ENCODE measurements at regions of chr20 and their contacts with region 1.

Region 1: DNA sequence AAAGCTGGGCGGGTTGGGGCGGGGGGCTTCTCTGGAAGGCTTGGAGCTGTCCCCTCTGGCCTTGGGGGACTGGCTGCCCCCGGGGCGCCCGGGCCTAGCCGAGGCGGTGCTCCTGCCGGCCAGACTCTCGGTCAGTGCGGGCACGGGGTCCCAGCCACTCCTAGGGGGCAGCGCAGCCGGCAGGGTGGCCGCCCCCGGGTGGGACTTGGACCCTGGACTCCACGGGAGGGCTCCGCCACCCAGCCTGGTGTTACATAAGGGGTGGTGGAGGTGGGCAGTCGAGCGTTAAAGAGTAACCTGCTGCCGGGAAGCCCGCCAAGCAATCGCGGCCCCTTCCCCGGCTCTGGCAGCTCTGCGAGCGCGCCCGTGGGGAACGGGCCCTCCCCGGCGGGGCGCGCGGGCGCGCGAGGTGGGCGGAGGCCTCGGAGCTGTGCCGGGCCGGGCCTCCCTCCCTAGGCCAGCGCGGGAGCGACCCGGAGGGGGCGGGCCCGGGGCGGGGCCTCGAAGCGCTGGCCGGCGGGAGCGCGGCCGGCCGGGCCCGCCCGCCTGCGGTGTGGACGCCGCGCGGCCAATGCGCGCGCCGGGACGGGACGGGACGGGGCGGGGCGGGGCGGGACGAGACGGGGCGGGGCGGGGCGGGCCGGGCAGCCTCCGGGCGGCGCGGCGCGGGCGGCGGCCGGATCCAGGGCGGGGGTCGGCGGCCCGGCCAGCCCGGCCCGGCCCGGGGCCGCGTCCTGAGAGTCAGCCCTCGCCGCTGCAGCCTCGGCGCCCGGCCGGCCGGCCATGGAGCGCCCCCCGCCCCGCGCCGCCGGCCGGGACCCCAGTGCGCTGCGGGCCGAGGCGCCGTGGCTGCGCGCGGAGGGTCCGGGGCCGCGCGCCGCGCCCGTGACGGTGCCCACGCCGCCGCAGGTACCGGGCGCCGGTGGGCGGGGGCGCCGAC is at the start of gene SLC2A4RG:
- DNase-seq: peak; percentile 83 to 90 (median 88)
- H3K4me3 ChIP-seq: peak within 1 kb of the TSS; percentile 75
- H3K27ac ChIP-seq: peak within 1 kb of the TSS; percentile 73 to 95
- H3K4me1 ChIP-seq: peaks cover 11% of the 10 kb centered on the region
- H3K27me3 ChIP-seq: no peaks in the 10 kb centered on the region
- CTCF ChIP-seq: no peak
- EP300 ChIP-seq: no peak
- POLR2A ChIP-seq: no peak
- total RNA-seq, gene SLC2A4RG: 20.6 to 199 (median 104) TPM

Region 2: DNA sequence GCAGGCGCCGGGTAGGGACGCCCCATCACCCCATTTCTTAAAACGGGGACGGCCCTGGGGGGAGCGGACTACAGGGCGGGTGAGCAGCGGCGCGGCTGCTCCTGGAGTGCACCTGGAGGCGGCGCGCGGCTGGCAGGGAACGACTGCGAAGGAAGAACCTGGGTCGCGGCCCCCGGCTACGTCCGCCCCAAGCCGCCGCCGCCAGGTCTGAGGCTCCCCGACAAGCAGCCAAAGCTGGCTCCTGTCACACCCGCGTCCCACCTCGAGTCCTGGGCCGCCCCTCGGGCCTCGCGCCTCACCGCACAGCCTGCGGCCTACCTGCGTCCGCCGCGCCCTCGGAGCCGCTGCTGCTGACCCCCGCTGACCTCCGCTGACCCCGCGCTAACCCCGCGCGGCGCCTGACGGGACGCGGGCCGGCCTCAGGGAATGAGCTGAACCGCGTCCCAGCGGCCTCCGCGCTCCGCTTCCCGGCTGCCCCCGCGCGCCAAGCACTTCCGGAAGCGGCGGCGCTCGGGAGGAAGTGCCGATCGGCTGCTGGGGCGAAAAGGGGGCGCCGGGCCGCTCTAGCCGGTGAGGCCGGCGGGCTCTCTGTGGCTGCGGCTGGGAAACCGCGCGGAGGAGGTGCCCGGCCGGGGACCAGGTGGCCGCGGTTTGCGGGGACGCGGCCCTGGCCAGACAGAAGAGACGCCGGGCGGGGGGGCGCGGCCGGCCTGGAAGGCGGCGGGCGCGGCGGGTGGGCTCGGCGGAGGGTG is 31.7 kb before region 1 on chr20 and contains the starts of genes ARFRP1 and ZGPAT:
- intact Hi-C with region 1: loop called in 1 of 4 experiments (anchors 2 kb)
- DNase-seq: peak; percentile 85 to 95 (median 90)
- H3K4me3 ChIP-seq: peak within 1 kb of the TSS; percentile 83
- H3K27ac ChIP-seq: peak within 1 kb of the TSS; percentile 50 to 88
- H3K4me1 ChIP-seq: peaks cover 8% of the 10 kb centered on the region
- H3K27me3 ChIP-seq: no peaks in the 10 kb centered on the region
- CTCF ChIP-seq: peak in 1 of 3 donors; percentile 8
- EP300 ChIP-seq: no peak
- POLR2A ChIP-seq: peak; percentile 38
- total RNA-seq, gene ARFRP1: 25.6 to 59.5 (median 47.4) TPM
- total RNA-seq, gene ZGPAT: 14.0 to 25.6 (median 18.9) TPM

Measured in ovary (tissue), 10 donors.